Activated CD4-positive, alpha-beta T cell treated with anti-CD3 and anti-CD28 coated beads for 36 hours (primary cell): ENCODE measurements at regions of chr1 and their contacts with region 1.

Region 1: GRCh38 chr1:89310505-89310904 is 37.8 kb upstream of the GBP5 start:
- DNase-seq: no peak
- ATAC-seq: peak; percentile 78
- H3K4me3 Mint-ChIP-seq: no peak overlapping the region
- H3K27ac Mint-ChIP-seq: peak overlapping the region; percentile 86
- H3K4me1 Mint-ChIP-seq: peaks cover 34% of the 10 kb centered on the region
- H3K27me3 Mint-ChIP-seq: no peaks in the 10 kb centered on the region

Region 2: DNA sequence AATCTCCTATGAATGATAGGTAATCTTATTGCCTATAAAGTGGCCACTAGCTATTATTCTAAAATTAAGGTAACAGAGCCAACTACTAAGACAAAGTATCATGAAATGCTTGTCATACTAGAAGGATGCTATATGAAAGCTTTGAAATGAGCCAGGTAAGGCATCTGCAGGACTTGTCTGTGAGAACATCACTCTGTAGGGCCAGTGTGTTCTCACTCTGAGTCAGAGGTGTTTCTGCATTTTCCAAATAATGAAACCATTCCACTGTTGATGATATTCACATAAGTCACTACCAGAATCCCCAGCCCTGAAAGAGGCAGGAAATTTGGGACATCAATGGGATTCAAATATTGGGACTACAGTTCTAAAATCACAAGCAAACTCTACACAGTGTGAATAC is 12.0 kb before region 1 on chr1:
- CTCF ChIA-PET with region 1: interaction called, 13 read pairs
- POLR2A ChIA-PET with region 1: interaction called, 4 read pairs
- intact Hi-C with region 1: loop called (anchors 1 kb)
- DNase-seq: no peak
- ATAC-seq: peak; percentile 16
- H3K4me3 Mint-ChIP-seq: no peak overlapping the region
- H3K27ac Mint-ChIP-seq: no peak overlapping the region
- H3K4me1 Mint-ChIP-seq: peaks cover 59% of the 10 kb centered on the region
- H3K27me3 Mint-ChIP-seq: no peaks in the 10 kb centered on the region

Region 3: DNA sequence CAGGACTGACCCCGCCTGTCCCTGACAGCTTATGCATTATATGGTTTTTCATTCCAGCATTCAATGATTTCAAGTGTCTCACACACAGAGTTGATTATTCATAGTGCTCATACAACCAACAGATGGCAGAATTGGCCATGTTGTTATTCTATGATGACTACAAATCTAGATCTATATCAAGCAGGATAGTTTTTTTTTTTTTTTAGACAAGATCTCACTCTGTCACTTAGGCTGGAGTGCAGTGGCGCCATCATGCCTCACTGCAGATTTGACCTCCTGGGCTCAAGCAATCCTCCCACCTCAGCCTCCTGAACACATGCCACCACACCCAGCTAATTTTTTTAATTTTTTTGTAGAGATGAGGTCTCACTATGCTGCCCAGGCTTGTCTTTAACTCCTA is 470.2 kb after region 1 on chr1:
- CTCF ChIA-PET with region 1: no interaction called
- POLR2A ChIA-PET with region 1: no interaction called
- intact Hi-C with region 1: no loop called
- DNase-seq: peak; percentile 59
- ATAC-seq: peak; percentile 73
- H3K4me3 Mint-ChIP-seq: peak overlapping the region; percentile 48
- H3K27ac Mint-ChIP-seq: peak overlapping the region; percentile 86
- H3K4me1 Mint-ChIP-seq: peaks cover 44% of the 10 kb centered on the region
- H3K27me3 Mint-ChIP-seq: no peaks in the 10 kb centered on the region